HepG2 (cell line): ENCODE measurements at regions of chrX and their contacts with region 1.

Region 1: GRCh38 chrX:116198810-116199209 is 28.3 kb downstream of the AGTR2 start:
- DNase-seq: peak; percentile 0
- ATAC-seq: no peak
- H3K4me3 ChIP-seq: no peak overlapping the region
- H3K27ac ChIP-seq: no peak overlapping the region
- H3K4me1 ChIP-seq: no peaks in the 10 kb centered on the region
- H3K27me3 ChIP-seq: no peaks in the 10 kb centered on the region
- CTCF ChIP-seq: 0 out of 2 replicates have a peak, but pooled peaks have one; percentile 28
- EP300 ChIP-seq: no peak
- POLR2A ChIP-seq: no peak
- RAD21 ChIP-seq: no peak

Region 2: DNA sequence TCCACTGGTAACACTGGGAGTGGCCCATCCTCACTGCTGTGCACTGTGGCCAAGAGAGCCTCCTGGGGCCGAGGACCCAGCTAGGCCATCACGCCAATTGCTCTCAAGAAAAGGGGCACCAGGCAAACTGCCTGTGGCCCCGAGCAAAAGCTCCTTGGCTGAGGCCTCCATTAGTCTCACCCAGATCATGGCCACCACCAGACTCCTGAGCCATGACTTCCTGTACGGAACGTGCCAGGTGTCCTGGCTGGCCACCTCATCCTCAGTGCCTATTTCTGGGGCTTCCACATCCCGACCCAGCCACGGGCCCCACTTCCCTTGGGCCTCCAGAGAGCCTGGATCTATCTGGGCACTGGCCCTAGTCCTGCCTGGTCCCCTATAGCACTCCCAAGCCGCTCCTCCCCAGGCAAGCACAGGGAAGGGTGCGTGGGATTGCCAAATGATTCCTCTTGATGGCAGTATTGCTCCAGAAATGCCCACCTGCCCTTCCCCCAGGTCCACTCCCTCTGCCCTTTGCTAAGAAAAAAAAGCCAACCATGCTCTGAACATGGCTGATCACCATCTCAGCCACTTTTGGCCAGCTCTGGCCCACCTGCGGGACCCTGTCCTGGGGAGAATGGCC is 240.8 kb before region 1 on chrX:
- CTCF ChIA-PET with region 1: interaction called, 3 read pairs
- POLR2A ChIA-PET with region 1: no interaction called
- in situ Hi-C with region 1: no loop called
- intact Hi-C with region 1: loop called (anchors 2 kb)
- DNase-seq: peak; percentile 21
- ATAC-seq: peak; percentile 94
- H3K4me3 ChIP-seq: peak overlapping the region in 1 of 3 experiments; percentile 10; a peak in 1 of 6 replicates
- H3K27ac ChIP-seq: no peak overlapping the region
- H3K4me1 ChIP-seq: peaks cover 14% of the 10 kb centered on the region
- H3K27me3 ChIP-seq: no peaks in the 10 kb centered on the region
- CTCF ChIP-seq: peak; percentile 83
- EP300 ChIP-seq: no peak
- POLR2A ChIP-seq: no peak
- RAD21 ChIP-seq: peak; percentile 74